Endothelial cell of umbilical vein (primary cell): ENCODE measurements at regions of chr6 and their contacts with region 1.

Region 1: GRCh38 chr6:131116749-131117360 is 18.4 kb upstream of the AKAP7 start:
- DNase-seq: peak; percentile 69
- H3K4me3 ChIP-seq: no peak overlapping the region
- H3K27ac ChIP-seq: no peak overlapping the region
- H3K4me1 ChIP-seq: no peaks in the 10 kb centered on the region
- H3K27me3 ChIP-seq: no peaks in the 10 kb centered on the region
- CTCF ChIP-seq: peak; percentile 10 to 23
- POLR2A ChIP-seq: no peak

Region 2: DNA sequence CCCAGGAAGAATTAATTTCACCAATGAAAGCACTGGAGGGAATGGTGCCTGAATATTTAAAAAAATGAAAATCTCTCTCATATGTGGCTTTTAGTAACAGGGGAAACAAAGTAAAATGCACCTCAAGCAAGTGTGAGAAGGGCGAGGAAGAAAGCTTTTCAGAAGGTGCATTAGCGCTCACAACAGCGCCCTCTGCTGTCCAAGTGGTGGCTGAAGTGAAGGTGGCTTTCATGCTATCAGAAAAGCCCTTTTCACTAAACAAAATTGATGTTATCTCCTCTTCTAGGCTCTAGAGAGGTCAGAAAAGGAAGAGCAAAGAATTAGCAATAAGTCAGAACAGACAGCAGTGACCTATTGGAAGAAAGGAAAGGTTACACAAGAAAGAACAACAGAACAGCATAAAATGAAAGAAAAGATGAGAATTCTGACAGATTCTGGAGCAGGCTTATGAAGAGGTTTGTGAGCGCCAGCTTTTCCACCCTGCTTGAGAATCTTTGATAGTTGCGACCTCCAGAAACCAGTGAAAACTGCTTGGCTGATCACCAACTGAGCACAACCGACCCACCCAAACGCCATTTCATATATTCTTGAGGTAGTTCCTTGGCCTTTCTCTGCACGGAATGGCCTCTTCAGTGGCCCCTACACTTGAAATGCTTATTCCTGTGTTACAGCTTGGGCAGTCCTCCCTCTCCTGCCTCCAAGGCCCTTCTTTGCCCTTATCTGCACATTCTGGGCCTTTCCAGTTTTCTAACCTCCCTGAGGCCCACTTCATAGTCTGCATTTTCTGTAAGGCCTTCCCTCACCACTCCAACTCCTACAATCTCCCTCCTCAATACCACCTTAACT is 244.4 kb before region 1 on chr6:
- CTCF ChIA-PET with region 1: interaction called, 25 read pairs
- POLR2A ChIA-PET with region 1: no interaction called
- dilution Hi-C with region 1: no loop called
- intact Hi-C with region 1: no loop called
- DNase-seq: peak; percentile 51
- H3K4me3 ChIP-seq: no peak overlapping the region
- H3K27ac ChIP-seq: no peak overlapping the region
- H3K4me1 ChIP-seq: no peaks in the 10 kb centered on the region
- H3K27me3 ChIP-seq: no peaks in the 10 kb centered on the region
- CTCF ChIP-seq: peak; percentile 85 to 90
- POLR2A ChIP-seq: no peak

Region 3: DNA sequence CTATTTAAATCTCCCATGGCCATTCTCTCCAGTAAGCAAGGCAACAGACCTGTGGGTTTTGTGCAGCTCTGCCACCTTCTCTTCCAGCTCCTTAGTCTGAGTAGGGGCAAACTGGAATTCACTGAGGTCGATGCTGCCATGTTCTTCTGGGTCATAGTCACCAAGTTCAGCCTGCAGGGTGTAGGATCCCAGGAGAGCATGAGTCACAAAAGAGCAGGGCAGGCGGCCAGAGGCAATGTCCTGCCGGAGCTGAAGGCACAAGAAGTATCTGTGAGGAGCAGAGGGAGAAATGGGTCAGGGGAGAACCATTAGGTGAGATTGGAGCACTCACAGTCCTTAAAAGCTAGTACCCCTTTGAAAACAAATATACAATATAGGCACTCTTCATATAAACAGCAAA is 215.9 kb before region 1 on chr6:
- CTCF ChIA-PET with region 1: interaction called, 22 read pairs
- POLR2A ChIA-PET with region 1: no interaction called
- dilution Hi-C with region 1: no loop called
- intact Hi-C with region 1: no loop called
- DNase-seq: no peak
- H3K4me3 ChIP-seq: no peak overlapping the region
- H3K27ac ChIP-seq: no peak overlapping the region
- H3K4me1 ChIP-seq: no peaks in the 10 kb centered on the region
- H3K27me3 ChIP-seq: no peaks in the 10 kb centered on the region
- CTCF ChIP-seq: no peak
- POLR2A ChIP-seq: no peak

Region 4: GRCh38 chr6:130997061-130997753 is 119.6 kb before region 1 on chr6:
- CTCF ChIA-PET with region 1: interaction called, 7 read pairs
- POLR2A ChIA-PET with region 1: no interaction called
- dilution Hi-C with region 1: no loop called
- intact Hi-C with region 1: loop called (anchors 5 kb)
- DNase-seq: peak; percentile 74
- H3K4me3 ChIP-seq: no peak overlapping the region
- H3K27ac ChIP-seq: no peak overlapping the region
- H3K4me1 ChIP-seq: peaks cover 23% of the 10 kb centered on the region
- H3K27me3 ChIP-seq: no peaks in the 10 kb centered on the region
- CTCF ChIP-seq: no peak
- POLR2A ChIP-seq: no peak

Region 5: DNA sequence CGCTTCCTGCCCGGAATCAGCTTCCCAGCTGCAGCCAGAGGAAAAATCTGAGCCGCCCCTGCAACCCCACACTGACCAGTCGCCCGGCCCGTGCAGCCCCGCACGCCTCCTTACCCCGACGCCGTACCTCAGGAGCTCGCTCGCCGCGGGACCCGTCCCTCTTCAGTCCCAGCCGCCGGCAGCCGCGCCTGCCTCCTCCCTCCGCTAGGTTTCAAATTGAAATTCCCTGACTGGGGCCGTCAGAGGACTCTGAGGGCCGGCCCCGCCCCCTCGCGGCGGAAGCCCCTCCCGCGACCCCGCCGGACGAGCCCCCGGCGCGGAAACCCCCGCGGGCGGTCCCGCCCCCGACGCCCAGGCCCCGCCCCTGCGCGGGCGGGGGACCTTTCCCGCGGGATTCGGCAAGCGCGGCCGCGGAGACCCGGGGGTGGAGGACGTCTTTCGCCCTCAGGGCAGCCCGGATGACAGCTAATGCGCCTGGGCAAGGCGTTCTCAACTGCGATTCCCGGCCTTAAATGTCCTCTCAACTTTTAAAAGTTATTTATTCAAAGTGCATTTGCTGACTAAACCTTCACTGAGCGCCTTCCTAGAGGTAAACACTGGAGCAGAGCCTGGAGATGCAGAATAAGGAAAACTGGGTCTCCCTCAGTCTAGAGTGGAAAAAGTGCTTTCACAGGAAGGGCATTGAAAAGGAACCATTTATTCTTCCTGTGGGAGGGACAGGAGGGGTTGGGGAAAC is 53.7 kb before region 1 on chr6 and contains the start of gene EPB41L2:
- CTCF ChIA-PET with region 1: interaction called, 20 read pairs
- POLR2A ChIA-PET with region 1: no interaction called
- dilution Hi-C with region 1: no loop called
- intact Hi-C with region 1: loop called (anchors 1 kb)
- DNase-seq: peak; percentile 91
- H3K4me3 ChIP-seq: peak within 1 kb of the TSS; percentile 83 to 96 (median 89)
- H3K27ac ChIP-seq: peak within 1 kb of the TSS; percentile 90
- H3K4me1 ChIP-seq: peaks cover 10% of the 10 kb centered on the region
- H3K27me3 ChIP-seq: no peaks in the 10 kb centered on the region
- CTCF ChIP-seq: peak in 1 of 2 donors; percentile 19
- POLR2A ChIP-seq: peak; percentile 60
- total RNA-seq, gene EPB41L2: 84.8 and 87.7 TPM in 2 replicates

Region 6: DNA sequence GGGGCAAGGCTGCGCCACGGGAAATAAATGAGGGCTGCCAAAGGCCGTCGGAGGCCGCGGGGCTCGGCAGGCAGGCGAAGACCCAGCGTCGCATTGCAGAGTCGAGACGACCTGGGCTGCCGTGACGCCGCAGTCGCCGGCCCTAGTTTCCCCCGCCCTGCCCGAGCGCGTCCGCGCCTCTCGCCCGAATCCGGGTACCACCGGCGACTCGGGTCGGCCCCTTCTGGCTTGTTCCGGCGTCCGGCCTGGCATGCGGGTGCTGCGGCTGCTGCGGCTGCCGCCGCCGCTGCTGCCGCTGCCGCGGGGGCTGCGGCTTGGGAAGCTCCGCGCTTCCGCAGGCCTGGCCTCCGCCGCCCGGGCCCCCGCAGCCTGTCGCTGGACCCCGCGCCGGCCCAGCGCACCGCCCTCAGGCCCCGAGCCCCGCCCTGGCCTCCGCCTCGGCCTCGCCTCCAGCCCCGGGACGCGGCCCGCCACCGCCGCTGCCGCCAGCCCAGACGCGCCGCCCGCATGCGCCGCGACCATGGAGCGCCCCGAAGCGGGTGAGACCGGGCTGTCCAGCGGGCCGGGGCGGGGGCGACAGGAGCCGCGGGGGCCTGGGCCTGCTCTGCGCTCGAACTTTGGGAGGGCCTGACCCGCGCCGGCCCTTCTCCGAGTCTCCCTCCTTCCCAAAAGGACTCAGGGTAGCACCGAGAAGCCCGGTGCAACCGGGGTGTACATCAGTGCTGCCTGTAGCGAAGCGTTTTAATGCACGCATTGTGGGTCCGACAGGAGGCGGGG is 18.6 kb after region 1 on chr6 and contains the start of gene AKAP7:
- CTCF ChIA-PET with region 1: interaction called, 14 read pairs
- POLR2A ChIA-PET with region 1: no interaction called
- dilution Hi-C with region 1: no loop called
- intact Hi-C with region 1: no loop called
- DNase-seq: peak; percentile 67
- H3K4me3 ChIP-seq: peak within 1 kb of the TSS; percentile 60 to 94 (median 93)
- H3K27ac ChIP-seq: peak within 1 kb of the TSS; percentile 56
- H3K4me1 ChIP-seq: peaks cover 8% of the 10 kb centered on the region
- H3K27me3 ChIP-seq: no peaks in the 10 kb centered on the region
- CTCF ChIP-seq: no peak
- POLR2A ChIP-seq: peak; percentile 64
- total RNA-seq, gene AKAP7: 3.3 and 4.8 TPM in 2 replicates